Activated B cell treated with CpG ODN at 0.5 μM for 24 hours (primary cell): ENCODE measurements at regions of chr3 and their contacts with region 1.

Region 1: DNA sequence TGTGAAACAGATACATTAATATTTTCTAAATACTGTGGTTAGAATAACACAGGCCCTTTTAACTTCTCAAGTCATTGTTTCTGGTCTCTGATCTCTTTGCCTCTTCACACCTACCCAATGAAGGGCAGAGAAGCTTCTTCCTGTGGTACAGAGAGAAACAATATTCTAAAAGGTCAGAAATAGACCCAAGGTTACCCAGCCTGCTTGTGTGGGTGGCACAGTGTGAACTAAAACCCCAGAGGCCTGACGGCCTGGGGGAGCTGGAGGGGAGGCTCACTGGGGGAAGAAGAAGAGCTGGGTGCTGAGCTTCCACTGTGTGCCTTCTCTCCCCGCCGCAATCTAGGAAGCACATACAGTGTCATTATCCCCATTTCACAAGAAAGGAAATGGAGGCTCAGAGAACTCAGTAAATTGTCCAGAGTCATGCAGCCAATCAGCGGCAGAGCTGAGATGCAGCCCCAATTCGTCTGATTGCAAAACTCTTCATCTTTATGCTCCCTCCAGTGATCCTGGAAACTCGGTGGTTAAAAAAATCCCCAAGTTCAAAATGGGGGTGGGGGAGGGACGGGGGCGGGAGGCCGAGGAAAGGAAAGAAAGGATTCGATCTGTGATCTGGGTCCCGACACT is 64.1 kb upstream of the HEG1 start:
- DNase-seq: no peak
- ATAC-seq: peak; percentile 84
- H3K4me3 Mint-ChIP-seq: peak overlapping the region; percentile 74
- H3K27ac Mint-ChIP-seq: peak overlapping the region; percentile 62
- H3K4me1 Mint-ChIP-seq: peaks cover 32% of the 10 kb centered on the region
- H3K27me3 Mint-ChIP-seq: no peaks in the 10 kb centered on the region
- CTCF ChIP-seq: no peak

Region 2: DNA sequence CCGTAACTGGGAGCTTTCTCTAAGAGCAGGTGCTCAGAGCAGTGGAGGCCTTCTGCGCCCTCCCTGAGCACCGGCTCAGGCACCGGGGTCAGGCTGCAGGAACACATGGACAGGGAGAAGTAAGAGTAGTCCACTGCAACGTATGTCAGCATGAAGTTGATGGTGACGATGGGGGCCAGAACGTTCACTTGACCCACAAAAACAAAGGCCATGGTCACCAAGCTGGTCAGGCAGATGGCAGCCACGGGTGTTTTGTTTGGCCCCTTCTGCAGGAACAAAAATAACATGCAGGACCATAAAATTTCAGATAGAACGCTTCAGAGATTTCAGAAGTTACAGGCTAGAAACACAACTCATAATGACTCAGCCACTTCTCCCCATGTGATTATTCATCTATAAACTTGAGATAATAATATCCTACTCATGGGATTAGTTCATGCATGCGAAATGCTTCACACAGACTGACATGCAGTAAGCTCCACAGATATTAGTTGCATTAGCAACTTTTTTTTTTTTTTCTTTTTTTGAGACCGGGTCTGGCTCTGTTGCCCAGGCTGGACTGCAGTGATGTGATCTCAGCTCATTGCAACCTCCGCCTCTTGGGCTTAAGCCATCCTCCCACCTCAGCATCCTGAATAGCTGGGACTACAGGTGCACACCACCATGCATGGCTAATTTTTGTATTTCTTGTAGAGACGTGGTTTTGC is 11.9 kb before region 1 on chr3:
- CTCF ChIA-PET with region 1: no interaction called
- POLR2A ChIA-PET with region 1: interaction called, 6 read pairs
- intact Hi-C with region 1: loop called (anchors 1 kb)
- DNase-seq: no peak
- ATAC-seq: peak; percentile 79
- H3K4me3 Mint-ChIP-seq: peak overlapping the region; percentile 4
- H3K27ac Mint-ChIP-seq: peak overlapping the region; percentile 8
- H3K4me1 Mint-ChIP-seq: peaks cover 31% of the 10 kb centered on the region
- H3K27me3 Mint-ChIP-seq: no peaks in the 10 kb centered on the region
- CTCF ChIP-seq: no peak

Region 3: DNA sequence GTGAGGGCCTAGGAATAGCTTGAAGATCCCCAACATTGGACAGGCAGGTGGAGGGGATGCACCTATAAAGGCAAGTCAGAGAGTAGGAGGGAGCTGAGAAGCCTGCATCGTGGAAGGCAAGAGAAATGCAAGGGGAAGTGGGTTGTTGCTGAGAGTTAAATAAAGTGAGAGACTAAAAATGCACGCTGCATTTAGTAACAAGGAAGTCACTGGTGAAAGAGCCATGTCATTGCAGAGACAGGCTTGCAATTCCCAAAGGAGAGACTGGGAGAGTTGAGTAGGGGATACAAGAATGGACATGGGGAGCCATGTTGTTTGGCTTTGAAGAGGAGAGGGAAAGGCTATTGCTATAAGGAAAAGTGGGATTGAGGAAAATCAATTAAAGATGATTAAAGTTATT is 12.9 kb after region 1 on chr3:
- CTCF ChIA-PET with region 1: no interaction called
- POLR2A ChIA-PET with region 1: interaction called, 3 read pairs
- intact Hi-C with region 1: loop called (anchors 1 kb)
- DNase-seq: no peak
- ATAC-seq: peak; percentile 50
- H3K4me3 Mint-ChIP-seq: no peak overlapping the region
- H3K27ac Mint-ChIP-seq: peak overlapping the region; percentile 14
- H3K4me1 Mint-ChIP-seq: peaks cover 37% of the 10 kb centered on the region
- H3K27me3 Mint-ChIP-seq: no peaks in the 10 kb centered on the region
- CTCF ChIP-seq: no peak

Region 4: DNA sequence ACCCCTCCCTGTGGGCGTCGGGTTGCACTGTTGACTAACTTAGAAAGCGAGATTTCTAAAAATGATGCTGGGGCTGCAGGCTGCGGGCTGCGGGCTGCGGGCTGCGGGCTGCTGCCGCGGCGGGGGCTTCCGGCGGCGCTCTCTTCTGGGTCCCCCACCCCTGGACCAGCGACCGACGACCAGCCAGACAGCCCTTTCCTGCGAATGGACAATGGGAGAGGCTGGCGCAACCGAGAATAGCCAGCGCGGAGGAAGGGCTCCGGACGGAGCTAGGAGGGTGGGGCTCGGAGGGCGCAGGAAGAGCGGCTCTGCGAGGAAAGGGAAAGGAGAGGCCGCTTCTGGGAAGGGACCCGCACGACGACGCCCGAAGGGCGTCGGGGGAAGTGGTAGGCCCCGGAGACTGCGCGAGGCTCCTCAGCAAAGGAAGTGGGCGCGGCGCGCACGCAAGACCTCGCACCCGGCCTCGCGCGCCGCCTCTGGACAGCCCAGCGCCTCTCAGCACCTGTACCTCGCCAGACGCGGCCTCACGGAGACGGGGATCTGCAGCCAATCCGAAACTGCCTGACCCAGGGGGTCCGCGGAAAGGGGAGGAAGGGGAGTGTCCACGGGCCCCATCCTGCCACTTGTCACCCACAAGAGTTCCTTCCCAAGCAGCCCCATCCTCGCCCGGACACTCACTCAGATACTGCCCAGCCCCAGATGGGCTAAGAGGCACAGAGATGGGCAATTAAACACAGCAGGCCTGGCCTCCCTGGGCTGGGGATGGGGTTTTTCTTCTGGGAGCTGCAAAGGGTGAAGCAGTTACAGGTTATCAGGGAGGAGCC is 21.9 kb after region 1 on chr3:
- CTCF ChIA-PET with region 1: interaction called, 3 read pairs
- POLR2A ChIA-PET with region 1: interaction called, 7 read pairs
- intact Hi-C with region 1: loop called (anchors 2 kb)
- DNase-seq: peak; percentile 44
- ATAC-seq: peak; percentile 88
- H3K4me3 Mint-ChIP-seq: peak overlapping the region; percentile 82
- H3K27ac Mint-ChIP-seq: peak overlapping the region; percentile 79
- H3K4me1 Mint-ChIP-seq: peaks cover 66% of the 10 kb centered on the region
- H3K27me3 Mint-ChIP-seq: no peaks in the 10 kb centered on the region
- CTCF ChIP-seq: no peak